ENCODE measurements at regions of chr5 and their contacts with region 1.

Region 1: GRCh38 chr5:81851481-81852178 is 100.7 kb upstream of the SSBP2 start:
- DNase-seq: peak; percentile 98
- H3K4me3 Mint-ChIP-seq: peak overlapping the region; percentile 88
- H3K27ac Mint-ChIP-seq: peak overlapping the region; percentile 92
- H3K4me1 Mint-ChIP-seq: peaks cover 40% of the 10 kb centered on the region
- H3K27me3 Mint-ChIP-seq: no peaks in the 10 kb centered on the region

Region 2: GRCh38 chr5:81420039-81420667 is 431.5 kb before region 1 on chr5:
- intact Hi-C with region 1: loop called (anchors 5 kb)
- DNase-seq: peak; percentile 74
- H3K4me3 Mint-ChIP-seq: no peak overlapping the region
- H3K27ac Mint-ChIP-seq: peak overlapping the region; percentile 8
- H3K4me1 Mint-ChIP-seq: peaks cover 26% of the 10 kb centered on the region
- H3K27me3 Mint-ChIP-seq: no peaks in the 10 kb centered on the region

Region 3: GRCh38 chr5:81779125-81779915 is 72.3 kb before region 1 on chr5:
- intact Hi-C with region 1: loop called (anchors 2 kb)
- DNase-seq: peak; percentile 81
- H3K4me3 Mint-ChIP-seq: peak overlapping the region; percentile 85
- H3K27ac Mint-ChIP-seq: peak overlapping the region; percentile 88
- H3K4me1 Mint-ChIP-seq: peaks cover 21% of the 10 kb centered on the region
- H3K27me3 Mint-ChIP-seq: peaks cover under 1% of the 10 kb centered on the region

Region 4: GRCh38 chr5:81884871-81885270 is 33.2 kb after region 1 on chr5:
- intact Hi-C with region 1: no loop called
- DNase-seq: no peak
- H3K4me3 Mint-ChIP-seq: no peak overlapping the region
- H3K27ac Mint-ChIP-seq: no peak overlapping the region
- H3K4me1 Mint-ChIP-seq: no peaks in the 10 kb centered on the region
- H3K27me3 Mint-ChIP-seq: peaks cover 19% of the 10 kb centered on the region

Region 5: GRCh38 chr5:81895307-81895706 is 43.7 kb after region 1 on chr5:
- intact Hi-C with region 1: no loop called
- DNase-seq: no peak
- H3K4me3 Mint-ChIP-seq: no peak overlapping the region
- H3K27ac Mint-ChIP-seq: no peak overlapping the region
- H3K4me1 Mint-ChIP-seq: no peaks in the 10 kb centered on the region
- H3K27me3 Mint-ChIP-seq: no peaks in the 10 kb centered on the region

Region 6: DNA sequence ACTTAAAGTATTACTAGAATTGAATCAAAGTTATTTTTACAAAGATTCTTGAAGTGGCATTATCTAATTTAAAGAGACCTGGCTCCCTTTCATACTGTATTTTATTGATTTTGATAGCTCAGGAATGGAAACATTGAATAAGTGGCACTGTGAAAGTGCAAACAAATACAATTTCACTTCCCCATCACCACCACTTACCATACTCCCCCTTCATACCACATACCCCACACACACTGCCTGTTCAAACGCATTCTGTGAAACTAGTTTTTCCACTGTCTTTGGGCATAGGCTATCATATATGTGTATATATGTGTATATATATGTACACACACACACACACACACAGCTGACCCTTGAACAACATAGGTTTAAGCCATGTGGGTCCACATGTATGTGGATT is 58.0 kb after region 1 on chr5:
- intact Hi-C with region 1: no loop called
- DNase-seq: no peak
- H3K4me3 Mint-ChIP-seq: no peak overlapping the region
- H3K27ac Mint-ChIP-seq: no peak overlapping the region
- H3K4me1 Mint-ChIP-seq: no peaks in the 10 kb centered on the region
- H3K27me3 Mint-ChIP-seq: peaks cover 2% of the 10 kb centered on the region

Region 7: DNA sequence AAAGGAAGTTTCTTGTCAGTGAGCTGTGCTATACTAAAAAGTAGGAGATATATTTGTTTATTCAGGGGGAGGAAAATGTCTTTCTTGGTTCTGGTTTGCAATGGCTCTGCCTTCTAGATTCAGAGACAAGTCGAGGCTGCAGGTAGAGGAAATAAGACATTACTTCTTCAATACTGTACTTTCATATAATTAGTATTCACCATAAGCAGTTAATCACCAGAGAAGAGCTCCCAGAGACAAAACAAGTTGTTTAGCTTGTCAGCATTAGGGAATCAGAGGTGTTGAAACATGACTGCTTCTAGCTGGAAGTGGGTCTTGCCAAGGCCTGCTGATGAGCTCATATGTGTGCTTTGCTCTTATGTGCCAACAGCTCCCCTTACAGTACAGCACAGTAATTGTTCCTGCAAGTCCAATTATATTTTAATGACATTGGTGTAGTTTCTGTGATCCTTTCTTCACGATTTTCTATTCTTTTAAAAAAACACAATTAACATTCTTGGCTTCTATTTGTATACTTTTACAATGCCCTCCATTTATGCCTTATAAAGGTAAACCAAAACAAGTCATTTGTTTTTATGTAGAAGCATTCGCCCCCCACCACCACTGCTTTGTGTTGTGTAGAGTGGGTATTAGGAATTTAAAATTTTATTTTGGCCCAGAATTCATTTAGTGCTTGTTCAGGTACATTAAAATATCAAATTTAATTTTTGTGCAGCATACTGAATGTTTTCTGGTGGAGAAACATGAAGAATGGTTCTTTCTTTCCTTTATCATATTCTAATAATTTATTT is 314.3 kb after region 1 on chr5:
- intact Hi-C with region 1: loop called (anchors 5 kb)
- DNase-seq: peak; percentile 76
- H3K4me3 Mint-ChIP-seq: no peak overlapping the region
- H3K27ac Mint-ChIP-seq: no peak overlapping the region
- H3K4me1 Mint-ChIP-seq: peaks cover 5% of the 10 kb centered on the region
- H3K27me3 Mint-ChIP-seq: no peaks in the 10 kb centered on the region

Region 8: DNA sequence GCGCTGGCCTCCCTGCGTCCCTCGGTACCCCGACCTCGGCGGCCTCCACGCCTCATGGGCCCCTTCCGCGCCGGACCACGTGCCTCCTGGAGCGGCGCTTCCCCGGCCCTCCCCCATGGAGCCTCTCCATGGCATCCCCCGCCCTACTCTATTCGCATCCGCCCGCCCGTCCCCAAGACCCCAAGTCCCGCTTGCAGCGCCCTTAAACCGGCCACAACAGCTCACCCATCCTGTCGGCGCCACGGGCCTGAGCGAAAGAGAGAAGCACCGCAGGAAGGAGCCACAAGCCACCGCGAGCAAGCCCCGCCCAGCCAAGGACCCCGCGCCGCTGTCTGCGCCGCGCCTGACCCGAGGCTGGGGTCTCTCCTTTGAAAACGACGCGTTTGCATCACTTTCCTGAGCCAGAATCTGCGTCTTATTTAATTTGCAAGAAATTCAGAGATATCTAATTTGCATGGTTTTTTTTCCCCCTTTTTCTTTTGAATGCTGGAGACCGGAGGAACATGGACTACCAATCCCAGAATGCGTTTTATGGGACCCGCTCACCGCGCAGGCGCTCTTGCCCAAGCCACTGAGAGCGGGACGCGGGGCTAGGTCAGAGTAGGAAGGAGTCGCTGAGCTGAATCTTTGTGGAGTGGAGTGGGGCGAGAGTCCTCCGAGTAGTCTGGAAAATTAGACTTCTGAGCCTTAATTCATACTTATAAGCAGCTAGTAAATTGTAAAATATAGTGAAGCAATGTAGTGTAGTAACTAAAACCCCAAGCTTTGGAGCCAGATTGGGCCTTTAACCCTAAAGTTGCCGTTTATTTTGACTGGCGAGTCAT is 426.7 kb after region 1 on chr5 and contains the start of gene RPS23:
- intact Hi-C with region 1: loop called (anchors 5 kb)
- DNase-seq: peak; percentile 96
- H3K4me3 Mint-ChIP-seq: peak within 1 kb of the TSS; percentile 89
- H3K27ac Mint-ChIP-seq: peak within 1 kb of the TSS; percentile 98
- H3K4me1 Mint-ChIP-seq: peaks cover 32% of the 10 kb centered on the region
- H3K27me3 Mint-ChIP-seq: no peaks in the 10 kb centered on the region
- total RNA-seq, gene RPS23: 2,481 and 2,489 TPM in 2 replicates